Gastrocnemius medialis (tissue), 4 donors: ENCODE measurements at regions of chr1 and their contacts with region 1.

Region 1: GRCh38 chr1:28642847-28643635 is at the start of gene TAF12:
- DNase-seq: peak; percentile 84 to 91
- ATAC-seq: peak; percentile 83 to 90
- H3K4me3 ChIP-seq: peak within 1 kb of the TSS; percentile 71 to 95 (median 81)
- H3K27ac ChIP-seq: peak within 1 kb of the TSS; percentile 85 to 96 (median 92)
- H3K4me1 ChIP-seq: peaks cover 26 to 50% of the 10 kb centered on the region in 2 donors
- H3K27me3 ChIP-seq: no peaks in the 10 kb centered on the region
- CTCF ChIP-seq: peak; percentile 10 to 55 (median 50)
- POLR2A ChIP-seq: peak; percentile 92 to 94
- total RNA-seq, gene TAF12: 33.5 to 81.6 (median 65.0) TPM

Region 2: GRCh38 chr1:28552758-28553663 is 90.0 kb before region 1 on chr1 and contains the start of gene TRNAU1AP:
- in situ Hi-C with region 1: no loop called
- intact Hi-C with region 1: loop called (anchors 5 kb)
- DNase-seq: peak; percentile 95 to 96
- ATAC-seq: peak; percentile 96
- H3K4me3 ChIP-seq: peak within 1 kb of the TSS; percentile 76 to 81 (median 80)
- H3K27ac ChIP-seq: peak within 1 kb of the TSS; percentile 86 to 93 (median 90)
- H3K4me1 ChIP-seq: peaks cover 8 to 14% of the 10 kb centered on the region in 2 donors
- H3K27me3 ChIP-seq: no peaks in the 10 kb centered on the region
- CTCF ChIP-seq: no peak
- POLR2A ChIP-seq: peak; percentile 80 to 87
- total RNA-seq, gene TRNAU1AP: 5.3 to 19.7 (median 12.0) TPM

Region 3: GRCh38 chr1:28668191-28668955 is 25.3 kb after region 1 on chr1 and contains the start of gene GMEB1:
- in situ Hi-C with region 1: no loop called
- intact Hi-C with region 1: loop called (anchors 1 kb)
- DNase-seq: peak; percentile 74 to 85
- ATAC-seq: peak; percentile 86 to 87
- H3K4me3 ChIP-seq: peak within 1 kb of the TSS; percentile 85 to 98 (median 96)
- H3K27ac ChIP-seq: peak within 1 kb of the TSS; percentile 99 to 100 (median 99)
- H3K4me1 ChIP-seq: peaks cover 10 to 20% of the 10 kb centered on the region in 2 donors
- H3K27me3 ChIP-seq: no peaks in the 10 kb centered on the region
- CTCF ChIP-seq: peak in 1 of 5 experiments; percentile 16
- POLR2A ChIP-seq: no peak
- total RNA-seq, gene GMEB1: 6.2 to 12.0 (median 9.2) TPM

Region 4: GRCh38 chr1:28761189-28761588 is 118.1 kb after region 1 on chr1:
- in situ Hi-C with region 1: no loop called
- intact Hi-C with region 1: loop called (anchors 5 kb)
- DNase-seq: no peak
- ATAC-seq: no peak
- H3K4me3 ChIP-seq: no peak overlapping the region
- H3K27ac ChIP-seq: peak overlapping the region; percentile 19 to 78 (median 55)
- H3K4me1 ChIP-seq: peaks cover 52 to 56% of the 10 kb centered on the region in 2 donors
- H3K27me3 ChIP-seq: no peaks in the 10 kb centered on the region
- CTCF ChIP-seq: no peak
- POLR2A ChIP-seq: no peak